IMR-90 (cell line): ENCODE measurements at regions of chr11 and their contacts with region 1.

Region 1: DNA sequence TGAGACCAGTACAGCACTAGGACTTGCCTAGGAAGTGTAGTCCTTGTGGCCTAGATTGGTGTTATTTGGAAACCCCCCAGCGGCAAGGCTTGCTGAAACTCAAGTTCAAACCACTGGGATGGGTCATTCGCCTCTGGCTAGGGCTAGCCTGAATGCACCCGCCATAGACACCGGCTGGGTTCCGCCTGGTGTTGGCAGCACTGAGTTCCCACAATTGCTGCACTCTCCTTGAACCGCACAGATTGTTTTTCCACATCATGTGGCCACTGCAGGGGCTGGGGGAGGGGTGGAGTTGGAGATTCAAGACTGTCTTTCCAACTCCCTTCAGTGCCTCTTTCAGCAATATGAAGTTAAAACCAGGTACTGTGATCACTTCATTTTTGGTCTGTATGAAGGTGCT is 43.1 kb downstream of the CCDC73 start:
- DNase-seq: no peak
- ATAC-seq: no peak
- H3K4me3 ChIP-seq: no peak overlapping the region
- H3K27ac ChIP-seq: no peak overlapping the region
- H3K4me1 ChIP-seq: no peaks in the 10 kb centered on the region
- H3K27me3 ChIP-seq: no peaks in the 10 kb centered on the region
- CTCF ChIP-seq: no peak
- POLR2A ChIP-seq: no peak
- RAD21 ChIP-seq: no peak

Region 2: DNA sequence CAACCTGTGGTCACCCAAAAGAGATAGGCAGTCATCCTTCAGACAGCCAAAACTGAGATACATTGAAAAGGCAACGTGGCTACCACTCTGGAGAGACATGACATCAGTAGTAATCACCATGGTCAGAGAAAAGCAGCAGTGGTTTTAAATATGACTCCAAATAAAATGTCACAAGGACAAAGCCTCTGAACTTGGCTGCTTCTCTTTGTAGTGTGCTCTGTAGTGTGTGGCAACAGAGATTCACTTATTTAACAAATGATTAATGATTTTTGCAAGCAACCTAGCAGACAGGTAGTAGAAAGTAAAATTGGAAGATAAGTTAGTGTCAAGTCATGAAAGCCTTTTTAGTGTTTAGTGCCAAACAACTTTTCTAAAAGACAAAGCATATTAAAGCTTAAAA is 1003.8 kb before region 1 on chr11:
- CTCF ChIA-PET with region 1: no interaction called
- POLR2A ChIA-PET with region 1: no interaction called
- dilution Hi-C with region 1: no loop called
- in situ Hi-C with region 1: no loop called
- intact Hi-C with region 1: loop called (anchors 10 kb)
- DNase-seq: no peak
- ATAC-seq: no peak
- H3K4me3 ChIP-seq: no peak overlapping the region
- H3K27ac ChIP-seq: no peak overlapping the region
- H3K4me1 ChIP-seq: no peaks in the 10 kb centered on the region
- H3K27me3 ChIP-seq: no peaks in the 10 kb centered on the region
- CTCF ChIP-seq: no peak
- POLR2A ChIP-seq: no peak
- RAD21 ChIP-seq: no peak